ENCODE measurements at regions of chr9 and their contacts with region 1.

Region 1: GRCh38 chr9:19229595-19230355 is 718 bp upstream of the DENND4C start:
- DNase-seq: no peak
- H3K4me3 ChIP-seq: peak overlapping the region; percentile 91
- CTCF ChIP-seq: no peak

Region 2: GRCh38 chr9:19186240-19186639 is 43.5 kb before region 1 on chr9:
- in situ Hi-C with region 1: loop called (anchors 5 kb)
- DNase-seq: no peak
- H3K4me3 ChIP-seq: no peak overlapping the region
- CTCF ChIP-seq: no peak